ENCODE measurements at regions of chr5 and their contacts with region 1.

Region 1: DNA sequence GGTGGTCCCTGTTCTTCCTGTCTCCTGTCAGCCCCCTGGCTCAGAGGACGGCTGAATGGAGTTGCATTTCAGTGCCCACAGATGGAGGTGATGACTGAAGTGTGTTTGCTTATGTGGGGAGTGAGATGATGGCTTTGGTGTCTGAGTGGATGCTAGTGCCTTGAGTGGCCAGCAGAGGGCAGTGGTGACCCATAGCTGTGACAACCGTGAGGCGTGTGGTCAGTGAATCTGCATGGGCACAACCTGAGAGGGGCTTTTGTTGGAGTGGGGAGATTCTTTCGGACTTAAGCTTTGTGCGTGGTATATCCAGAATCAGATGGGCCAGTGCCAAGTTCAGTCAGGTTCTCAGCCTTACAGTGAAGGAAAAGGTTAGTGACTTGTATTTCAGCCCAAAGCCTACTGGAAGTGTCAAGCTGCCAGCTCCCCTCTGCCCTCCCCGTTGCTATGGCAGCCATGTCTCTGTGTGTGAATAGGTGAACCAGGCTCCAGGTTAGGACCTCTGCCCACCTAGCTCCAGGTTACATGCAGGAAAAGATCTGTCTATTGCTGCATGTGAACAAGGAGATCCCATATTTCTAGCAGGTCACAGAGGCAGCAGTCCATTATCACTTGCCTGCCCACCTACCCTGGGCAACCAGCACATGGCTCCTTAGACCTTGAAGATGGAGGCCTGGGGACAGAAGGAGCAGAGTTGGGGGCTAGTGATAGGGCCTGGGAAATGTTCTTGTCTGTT is 14.7 kb upstream of the CXXC5 start:
- DNase-seq: no peak
- H3K4me3 ChIP-seq: no peak overlapping the region
- CTCF ChIP-seq: peak; percentile 95

Region 2: DNA sequence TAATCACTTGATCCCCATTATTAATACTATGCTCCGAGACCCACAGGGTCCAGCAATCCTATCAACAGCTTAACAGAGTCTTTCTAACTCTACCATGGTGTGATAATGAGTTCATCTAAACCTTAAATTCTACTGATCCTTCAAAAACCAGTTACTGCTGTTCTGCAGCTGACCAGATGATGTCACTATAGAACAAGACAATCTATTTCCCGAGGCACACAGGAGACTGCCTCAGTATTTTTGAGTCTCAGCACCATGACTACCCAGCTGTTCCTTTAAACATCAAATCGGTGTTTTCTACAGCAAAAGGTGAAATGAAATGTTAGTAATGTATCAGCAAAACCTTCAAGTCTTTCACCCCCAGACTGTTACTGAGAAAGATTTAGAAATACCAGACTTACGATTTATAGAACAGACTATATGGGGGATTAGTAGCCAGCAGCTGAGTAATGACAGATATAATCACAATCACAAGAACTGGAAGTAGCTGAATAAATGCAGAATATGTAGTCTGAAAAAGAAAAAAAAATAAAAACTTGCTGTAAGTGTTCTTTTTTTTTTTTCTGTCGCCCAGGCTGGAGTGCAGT is 211.1 kb before region 1 on chr5:
- CTCF ChIA-PET with region 1: interaction called, 52 read pairs
- POLR2A ChIA-PET with region 1: no interaction called
- DNase-seq: no peak
- H3K4me3 ChIP-seq: no peak overlapping the region
- CTCF ChIP-seq: peak; percentile 72

Region 3: GRCh38 chr5:139619861-139620260 is 13.6 kb before region 1 on chr5:
- CTCF ChIA-PET with region 1: interaction called, 35 read pairs
- POLR2A ChIA-PET with region 1: no interaction called
- DNase-seq: no peak
- H3K4me3 ChIP-seq: no peak overlapping the region
- CTCF ChIP-seq: no peak

Region 4: DNA sequence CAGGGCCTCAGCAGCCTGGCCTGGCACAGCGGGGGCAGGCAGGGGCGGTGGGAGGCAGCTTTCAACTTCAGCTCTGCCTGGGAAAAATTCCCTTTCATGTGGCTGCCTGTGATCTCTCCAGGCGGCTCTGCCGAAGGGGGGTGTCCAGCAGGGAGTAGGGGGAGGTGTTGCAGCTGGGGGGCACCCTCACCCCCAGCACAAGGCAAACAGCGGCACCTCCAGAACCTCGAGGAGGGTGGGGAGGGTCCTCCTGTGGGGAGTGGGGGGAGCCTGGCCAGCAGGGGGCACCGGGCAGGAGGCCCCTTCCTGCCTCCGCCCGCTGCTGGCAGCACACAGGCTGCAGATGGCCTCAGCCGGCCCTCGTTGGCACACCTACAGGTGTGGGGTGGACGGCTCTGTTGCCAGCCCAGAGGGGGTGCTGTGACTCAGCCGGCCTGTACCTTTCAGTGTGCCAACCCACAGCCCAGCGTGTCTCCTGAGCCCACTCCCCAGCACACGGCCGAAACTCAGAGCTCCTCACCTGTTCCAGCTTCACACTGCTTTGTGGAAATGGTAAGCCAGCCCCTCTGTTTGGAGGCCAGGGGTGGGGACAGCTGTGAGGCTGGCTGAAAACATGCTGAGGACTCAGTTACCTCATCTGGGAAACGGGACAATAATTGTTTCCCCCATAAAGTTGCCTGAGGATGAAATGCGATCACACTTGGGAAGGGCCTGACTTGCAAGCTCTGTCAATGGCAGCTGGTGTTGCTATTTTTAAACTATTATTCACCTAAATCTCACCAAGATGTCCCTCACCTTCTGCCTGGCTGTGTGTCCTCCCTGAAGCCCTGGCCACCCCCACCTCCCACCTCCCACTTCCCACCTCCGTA is 51.7 kb after region 1 on chr5:
- CTCF ChIA-PET with region 1: interaction called, 263 read pairs
- POLR2A ChIA-PET with region 1: interaction called, 3 read pairs
- DNase-seq: no peak
- H3K4me3 ChIP-seq: no peak overlapping the region
- CTCF ChIP-seq: peak; percentile 1

Region 5: GRCh38 chr5:139711067-139711905 is 77.8 kb after region 1 on chr5:
- CTCF ChIA-PET with region 1: interaction called, 59 read pairs
- POLR2A ChIA-PET with region 1: no interaction called
- DNase-seq: no peak
- H3K4me3 ChIP-seq: peak overlapping the region; percentile 59
- CTCF ChIP-seq: peak; percentile 16

Region 6: DNA sequence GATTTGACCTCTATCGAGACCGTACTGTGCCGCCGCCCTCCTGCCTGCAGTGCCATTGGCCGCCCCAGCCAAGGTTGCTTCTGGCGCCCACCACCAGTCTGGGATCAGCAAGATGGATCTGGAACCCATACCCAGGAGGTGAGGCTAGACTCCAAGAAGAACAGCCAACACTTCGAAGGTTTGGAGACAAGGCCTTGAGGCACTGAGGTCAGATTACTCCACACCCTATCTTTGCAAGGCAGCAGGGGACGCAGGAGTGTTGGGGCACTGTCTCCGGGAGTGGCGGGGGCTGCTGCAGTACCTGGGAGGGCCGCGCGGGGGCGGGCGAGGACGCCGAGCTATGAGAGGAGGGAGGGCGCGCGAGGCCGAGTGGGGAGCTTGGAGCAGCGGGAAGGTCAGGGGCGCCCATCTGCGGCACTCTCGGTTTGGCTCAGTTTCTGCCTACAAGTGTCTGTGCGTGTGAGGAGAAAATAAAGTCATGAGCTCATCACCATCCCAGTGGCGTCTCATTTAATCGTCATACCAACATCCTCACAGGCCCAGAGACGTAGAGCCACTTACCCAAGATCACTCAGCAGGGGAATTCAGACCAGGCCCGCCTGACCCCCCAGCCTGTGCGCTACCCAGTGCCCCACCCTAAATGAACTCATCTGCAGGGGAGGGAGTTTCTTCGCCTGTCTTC is 141.7 kb after region 1 on chr5:
- CTCF ChIA-PET with region 1: interaction called, 795 read pairs
- POLR2A ChIA-PET with region 1: no interaction called
- DNase-seq: no peak
- H3K4me3 ChIP-seq: no peak overlapping the region
- CTCF ChIP-seq: peak; percentile 91

Region 7: GRCh38 chr5:139968547-139969261 is 335.2 kb after region 1 on chr5:
- CTCF ChIA-PET with region 1: interaction called, 10 read pairs
- POLR2A ChIA-PET with region 1: no interaction called
- DNase-seq: no peak
- H3K4me3 ChIP-seq: no peak overlapping the region
- CTCF ChIP-seq: peak; percentile 100